GM12878 (cell line): ENCODE measurements at regions of chr13 and their contacts with region 1.

Region 1: DNA sequence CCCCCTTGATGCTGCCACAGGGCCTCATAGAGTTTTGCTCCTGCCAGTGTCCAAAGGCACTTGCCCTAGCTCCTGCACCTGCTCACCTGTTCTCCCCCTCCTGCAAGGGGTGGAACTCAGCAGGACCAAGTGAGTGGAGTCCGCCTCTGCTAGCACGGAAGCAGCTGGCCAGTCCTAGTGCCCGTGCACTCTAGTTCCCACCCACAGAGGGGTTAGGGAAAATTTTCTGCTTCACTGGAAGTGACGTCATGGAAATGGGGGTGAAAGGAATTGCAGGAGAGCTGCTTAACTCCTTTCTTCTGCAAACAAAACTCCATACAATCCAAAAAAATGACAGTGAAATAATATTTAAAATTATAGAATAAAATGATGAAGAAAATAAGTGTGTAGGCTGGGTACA is 609.7 kb upstream of the SLITRK1 start:
- DNase-seq: no peak
- ATAC-seq: peak; percentile 54
- H3K4me3 ChIP-seq: no peak overlapping the region
- H3K27ac ChIP-seq: no peak overlapping the region
- H3K4me1 ChIP-seq: no peaks in the 10 kb centered on the region
- H3K27me3 ChIP-seq: no peaks in the 10 kb centered on the region
- CTCF ChIP-seq: no peak
- EP300 ChIP-seq: no peak
- POLR2A ChIP-seq: no peak
- RAD21 ChIP-seq: no peak

Region 2: GRCh38 chr13:84455143-84455905 is 36.6 kb before region 1 on chr13:
- CTCF ChIA-PET with region 1: interaction called, 12 read pairs
- POLR2A ChIA-PET with region 1: no interaction called
- RAD21 ChIA-PET with region 1: interaction called, 5 read pairs
- SMC1A ChIA-PET with region 1: interaction called, 6 read pairs
- in situ Hi-C with region 1: no loop called
- intact Hi-C with region 1: no loop called
- DNase-seq: no peak
- ATAC-seq: peak; percentile 74
- H3K4me3 ChIP-seq: no peak overlapping the region
- H3K27ac ChIP-seq: no peak overlapping the region
- H3K4me1 ChIP-seq: no peaks in the 10 kb centered on the region
- H3K27me3 ChIP-seq: no peaks in the 10 kb centered on the region
- CTCF ChIP-seq: peak in 1 of 3 experiments; percentile 22; a peak in 2 of 6 replicates
- EP300 ChIP-seq: no peak
- POLR2A ChIP-seq: no peak
- RAD21 ChIP-seq: no peak

Region 3: GRCh38 chr13:84563611-84564010 is 71.7 kb after region 1 on chr13:
- CTCF ChIA-PET with region 1: interaction called, 4 read pairs
- POLR2A ChIA-PET with region 1: interaction called, 3 read pairs
- RAD21 ChIA-PET with region 1: interaction called, 16 read pairs
- SMC1A ChIA-PET with region 1: interaction called, 31 read pairs
- in situ Hi-C with region 1: no loop called
- intact Hi-C with region 1: no loop called
- DNase-seq: no peak
- ATAC-seq: no peak
- H3K4me3 ChIP-seq: no peak overlapping the region
- H3K27ac ChIP-seq: no peak overlapping the region
- H3K4me1 ChIP-seq: no peaks in the 10 kb centered on the region
- H3K27me3 ChIP-seq: no peaks in the 10 kb centered on the region
- CTCF ChIP-seq: no peak
- EP300 ChIP-seq: no peak
- POLR2A ChIP-seq: no peak
- RAD21 ChIP-seq: no peak

Region 4: DNA sequence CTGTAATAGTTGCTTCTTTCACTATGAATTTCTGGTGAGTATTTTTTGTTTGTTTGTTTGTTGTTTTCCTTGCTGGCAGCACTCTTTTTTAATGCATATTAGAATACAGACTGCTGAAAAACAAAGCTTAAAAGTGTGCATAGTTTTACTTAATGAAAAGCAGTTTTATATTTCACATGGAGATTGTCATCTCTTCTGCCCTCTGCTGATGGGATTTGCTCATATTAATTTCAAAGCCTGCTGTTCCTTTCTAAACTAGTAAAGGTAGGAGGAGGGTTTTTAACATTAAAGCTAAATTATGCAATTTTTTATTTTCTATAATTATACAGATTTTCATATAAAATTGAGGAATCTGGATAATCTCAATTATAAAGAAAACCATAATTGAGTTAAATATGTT is 82.9 kb after region 1 on chr13:
- CTCF ChIA-PET with region 1: interaction called, 4 read pairs
- POLR2A ChIA-PET with region 1: interaction called, 6 read pairs
- RAD21 ChIA-PET with region 1: interaction called, 12 read pairs
- SMC1A ChIA-PET with region 1: interaction called, 26 read pairs
- in situ Hi-C with region 1: no loop called
- intact Hi-C with region 1: no loop called
- DNase-seq: no peak
- ATAC-seq: 0 out of 3 replicates have a peak, but pooled peaks have one; percentile 42
- H3K4me3 ChIP-seq: no peak overlapping the region
- H3K27ac ChIP-seq: no peak overlapping the region
- H3K4me1 ChIP-seq: no peaks in the 10 kb centered on the region
- H3K27me3 ChIP-seq: no peaks in the 10 kb centered on the region
- CTCF ChIP-seq: no peak; a peak in 1 of 6 replicates
- EP300 ChIP-seq: no peak
- POLR2A ChIP-seq: no peak
- RAD21 ChIP-seq: peak; percentile 5; the same call in 1 of the 2 replicates